Activated B cell treated with CpG ODN at 0.5 μM for 24 hours (primary cell): ENCODE measurements at regions of chr6 and their contacts with region 1.

Region 1: GRCh38 chr6:161273752-161274487 is at the start of gene AGPAT4:
- DNase-seq: peak; percentile 39
- ATAC-seq: peak; percentile 96
- H3K4me3 Mint-ChIP-seq: peak within 1 kb of the TSS; percentile 89
- H3K27ac Mint-ChIP-seq: peak within 1 kb of the TSS; percentile 76
- H3K4me1 Mint-ChIP-seq: peaks cover 17% of the 10 kb centered on the region
- H3K27me3 Mint-ChIP-seq: peaks cover 7% of the 10 kb centered on the region
- CTCF ChIP-seq: no peak
- total RNA-seq, gene AGPAT4: 2.8 and 4.7 TPM in 2 replicates

Region 2: DNA sequence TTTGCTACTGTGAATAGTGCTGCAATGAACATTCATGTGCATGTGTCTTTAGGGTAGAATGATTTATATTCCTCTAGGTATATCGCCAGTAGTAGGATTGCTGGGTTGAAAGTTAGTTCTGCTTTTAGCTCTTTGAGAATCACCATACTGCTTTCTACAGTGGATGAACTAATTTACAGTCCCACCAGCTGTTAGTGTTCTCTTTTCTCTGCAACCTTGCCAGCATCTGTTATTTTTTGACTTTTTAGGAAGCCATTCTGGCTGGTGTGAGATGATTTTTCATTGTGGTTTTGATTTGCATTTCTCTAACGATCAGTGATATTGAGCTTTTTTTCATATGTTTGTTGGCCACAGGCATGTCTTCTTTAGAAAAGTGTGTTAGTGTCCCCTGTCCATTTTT is 531.8 kb before region 1 on chr6:
- CTCF ChIA-PET with region 1: no interaction called
- POLR2A ChIA-PET with region 1: interaction called, 9 read pairs
- intact Hi-C with region 1: loop called (anchors 5 kb)
- DNase-seq: no peak
- ATAC-seq: peak; percentile 36
- H3K4me3 Mint-ChIP-seq: no peak overlapping the region
- H3K27ac Mint-ChIP-seq: no peak overlapping the region
- H3K4me1 Mint-ChIP-seq: peaks cover 35% of the 10 kb centered on the region
- H3K27me3 Mint-ChIP-seq: peaks cover 10% of the 10 kb centered on the region
- CTCF ChIP-seq: no peak

Region 3: DNA sequence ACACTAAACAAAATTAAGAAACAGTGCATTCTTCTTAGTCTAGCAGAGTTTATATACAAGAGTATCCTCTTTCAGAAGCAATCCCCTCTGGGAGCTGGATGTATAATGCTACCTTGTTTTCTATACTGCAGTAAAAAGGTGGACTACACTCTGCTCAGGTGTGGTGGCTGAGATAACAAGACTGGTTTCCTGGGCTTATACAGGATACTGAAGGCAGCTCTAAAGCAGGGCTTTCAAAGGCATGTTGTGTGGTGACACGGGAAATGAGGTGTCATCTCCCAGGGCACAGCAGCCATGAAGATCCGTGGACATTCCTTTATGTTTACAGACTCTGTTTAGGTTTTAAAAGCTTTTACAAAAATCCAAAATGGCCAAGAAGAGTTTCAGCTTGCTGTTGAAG is 145.7 kb before region 1 on chr6:
- CTCF ChIA-PET with region 1: no interaction called
- POLR2A ChIA-PET with region 1: no interaction called
- intact Hi-C with region 1: no loop called
- DNase-seq: no peak
- ATAC-seq: no peak
- H3K4me3 Mint-ChIP-seq: no peak overlapping the region
- H3K27ac Mint-ChIP-seq: no peak overlapping the region
- H3K4me1 Mint-ChIP-seq: no peaks in the 10 kb centered on the region
- H3K27me3 Mint-ChIP-seq: no peaks in the 10 kb centered on the region
- CTCF ChIP-seq: no peak

Region 4: DNA sequence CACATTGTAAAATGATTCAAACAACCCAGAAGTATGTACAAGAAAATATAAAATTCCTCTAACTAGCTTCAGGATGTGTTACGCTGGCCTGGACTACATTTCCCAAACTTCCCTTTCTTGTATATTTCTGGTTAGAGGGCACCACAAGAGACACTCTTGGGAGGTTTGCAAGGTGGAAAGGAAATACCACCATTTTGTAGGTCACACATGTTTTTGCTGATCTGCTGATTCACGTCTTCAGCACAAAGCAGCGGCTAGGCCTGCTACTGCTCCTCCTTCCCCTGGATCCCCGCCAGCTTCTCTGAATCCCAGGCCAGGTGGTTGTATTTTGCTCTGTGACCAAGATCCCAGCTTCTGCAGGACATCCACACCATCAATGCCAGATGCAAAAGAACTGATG is 104.2 kb before region 1 on chr6:
- CTCF ChIA-PET with region 1: no interaction called
- POLR2A ChIA-PET with region 1: interaction called, 9 read pairs
- intact Hi-C with region 1: loop called (anchors 1 kb)
- DNase-seq: no peak
- ATAC-seq: no peak
- H3K4me3 Mint-ChIP-seq: peak overlapping the region; percentile 62
- H3K27ac Mint-ChIP-seq: peak overlapping the region; percentile 25
- H3K4me1 Mint-ChIP-seq: peaks cover 34% of the 10 kb centered on the region
- H3K27me3 Mint-ChIP-seq: no peaks in the 10 kb centered on the region
- CTCF ChIP-seq: no peak

Region 5: GRCh38 chr6:161353208-161353613 is 79.3 kb after region 1 on chr6:
- CTCF ChIA-PET with region 1: no interaction called
- POLR2A ChIA-PET with region 1: no interaction called
- intact Hi-C with region 1: no loop called
- DNase-seq: no peak
- ATAC-seq: no peak
- H3K4me3 Mint-ChIP-seq: no peak overlapping the region
- H3K27ac Mint-ChIP-seq: no peak overlapping the region
- H3K4me1 Mint-ChIP-seq: peaks cover 3% of the 10 kb centered on the region
- H3K27me3 Mint-ChIP-seq: no peaks in the 10 kb centered on the region
- CTCF ChIP-seq: no peak

Region 6: GRCh38 chr6:162727309-162728182 is 1453.6 kb after region 1 on chr6 and contains the starts of genes PACRG and PRKN:
- CTCF ChIA-PET with region 1: no interaction called
- POLR2A ChIA-PET with region 1: no interaction called
- intact Hi-C with region 1: loop called (anchors 1 kb)
- DNase-seq: peak; percentile 98
- ATAC-seq: peak; percentile 93
- H3K4me3 Mint-ChIP-seq: peak within 1 kb of the TSS; percentile 95
- H3K27ac Mint-ChIP-seq: peak within 1 kb of the TSS; percentile 81
- H3K4me1 Mint-ChIP-seq: peaks cover 10% of the 10 kb centered on the region
- H3K27me3 Mint-ChIP-seq: no peaks in the 10 kb centered on the region
- CTCF ChIP-seq: no peak
- total RNA-seq, gene PACRG: not detected in 2 replicates
- total RNA-seq, gene PRKN: 2.3 and 3.5 TPM in 2 replicates